ENCODE measurements at regions of chr22 and their contacts with region 1.

Region 1: GRCh38 chr22:30396871-30397655 is at the start of gene SEC14L2:
- DNase-seq: peak; percentile 65
- H3K4me3 Mint-ChIP-seq: peak within 1 kb of the TSS; percentile 82
- H3K27ac Mint-ChIP-seq: peak within 1 kb of the TSS; percentile 74
- H3K4me1 Mint-ChIP-seq: peaks cover 49% of the 10 kb centered on the region
- H3K27me3 Mint-ChIP-seq: no peaks in the 10 kb centered on the region
- total RNA-seq, gene SEC14L2: 7.6 to 10.5 TPM

Region 2: GRCh38 chr22:30262917-30263741 is 133.9 kb before region 1 on chr22:
- CTCF ChIA-PET with region 1: no interaction called
- POLR2A ChIA-PET with region 1: no interaction called
- DNase-seq: peak; percentile 81
- H3K4me3 Mint-ChIP-seq: peak overlapping the region; percentile 99
- H3K27ac Mint-ChIP-seq: peak overlapping the region; percentile 79
- H3K4me1 Mint-ChIP-seq: peaks cover 62% of the 10 kb centered on the region
- H3K27me3 Mint-ChIP-seq: no peaks in the 10 kb centered on the region

Region 3: GRCh38 chr22:30413745-30414524 is 16.9 kb after region 1 on chr22:
- CTCF ChIA-PET with region 1: interaction called, 11 read pairs
- POLR2A ChIA-PET with region 1: no interaction called
- DNase-seq: no peak
- H3K4me3 Mint-ChIP-seq: no peak overlapping the region
- H3K27ac Mint-ChIP-seq: no peak overlapping the region
- H3K4me1 Mint-ChIP-seq: peaks cover 33% of the 10 kb centered on the region
- H3K27me3 Mint-ChIP-seq: no peaks in the 10 kb centered on the region